ENCODE measurements at regions of chr6 and their contacts with region 1.

Region 1: DNA sequence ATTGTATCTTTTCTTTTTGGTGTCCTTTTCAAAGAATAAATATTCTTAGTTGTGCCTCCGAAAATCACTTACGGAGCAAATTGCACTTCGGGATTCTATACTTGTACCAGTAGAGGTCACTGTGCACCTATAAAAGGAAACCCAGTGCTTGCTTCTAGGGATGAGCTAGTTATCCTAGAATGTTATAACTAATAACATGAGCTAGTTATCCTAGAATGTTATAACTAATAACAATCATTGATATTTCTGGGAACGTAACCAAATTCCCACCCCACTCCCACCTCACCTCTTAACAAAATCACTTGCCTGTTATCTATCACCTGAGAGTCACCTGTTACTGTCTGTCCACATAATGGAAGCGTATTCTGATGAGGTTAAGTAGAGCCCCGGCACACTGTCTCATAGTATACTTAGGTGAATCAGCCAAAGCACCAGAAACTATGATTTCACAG is 126.9 kb upstream of the TIAM2 start:
- DNase-seq: peak in 1 of 2 experiments; percentile 46
- H3K4me3 ChIP-seq: no peak overlapping the region
- H3K4me3 Mint-ChIP-seq: no peak overlapping the region
- H3K27ac Mint-ChIP-seq: no peak overlapping the region
- H3K4me1 ChIP-seq: peaks cover 8% of the 10 kb centered on the region
- H3K4me1 Mint-ChIP-seq: peaks cover 10% of the 10 kb centered on the region
- H3K27me3 ChIP-seq: no peaks in the 10 kb centered on the region
- H3K27me3 Mint-ChIP-seq: no peaks in the 10 kb centered on the region
- CTCF ChIP-seq: peak; percentile 66 to 75

Region 2: GRCh38 chr6:154733012-154733625 is 135.1 kb before region 1 on chr6 and contains the start of gene SCAF8:
- CTCF ChIA-PET with region 1: no interaction called
- POLR2A ChIA-PET with region 1: no interaction called
- intact Hi-C with region 1: loop called (anchors 5 kb)
- DNase-seq: peak; percentile 67 to 92
- H3K4me3 ChIP-seq: peak within 1 kb of the TSS; percentile 92
- H3K4me3 Mint-ChIP-seq: peak within 1 kb of the TSS; percentile 84
- H3K27ac Mint-ChIP-seq: peak within 1 kb of the TSS; percentile 89
- H3K4me1 ChIP-seq: peaks cover 13% of the 10 kb centered on the region
- H3K4me1 Mint-ChIP-seq: peaks cover 12% of the 10 kb centered on the region
- H3K27me3 ChIP-seq: no peaks in the 10 kb centered on the region
- H3K27me3 Mint-ChIP-seq: no peaks in the 10 kb centered on the region
- CTCF ChIP-seq: peak; percentile 53 to 79
- total RNA-seq, gene SCAF8: 45.2 and 45.9 TPM in 2 replicates

Region 3: DNA sequence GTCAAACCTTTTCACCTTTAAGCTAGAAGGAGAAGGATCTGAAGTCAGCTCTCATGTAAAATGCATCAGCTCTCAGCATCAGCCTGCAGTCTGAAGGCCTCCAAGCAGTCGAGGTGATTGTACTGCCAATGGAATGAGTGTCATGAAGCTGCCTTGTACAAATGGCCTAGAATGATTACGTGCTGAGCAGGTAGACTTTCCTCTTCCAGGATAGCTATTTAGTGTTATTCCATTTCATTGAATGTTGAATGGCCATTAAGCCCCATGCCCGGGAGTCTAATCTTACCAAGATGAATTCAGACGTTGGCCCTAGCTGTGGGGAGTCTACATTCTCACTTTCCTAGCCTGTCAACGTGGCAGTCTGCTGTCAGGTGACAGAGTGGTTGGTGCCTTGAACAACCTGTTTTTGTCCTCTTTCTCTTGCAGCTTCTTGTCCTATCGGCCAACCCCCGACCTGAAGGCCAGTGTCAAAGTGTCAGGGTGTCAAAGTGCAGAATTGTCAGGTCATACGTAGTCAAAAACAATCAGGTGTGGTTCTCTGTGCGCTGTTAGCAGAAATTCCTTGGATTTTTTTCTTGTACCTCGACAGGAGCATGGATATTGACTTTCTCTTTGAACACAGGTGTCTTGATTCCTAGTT is 31.8 kb after region 1 on chr6:
- CTCF ChIA-PET with region 1: interaction called, 4 read pairs
- POLR2A ChIA-PET with region 1: no interaction called
- intact Hi-C with region 1: loop called (anchors 1 kb)
- DNase-seq: peak; percentile 65 to 70
- H3K4me3 ChIP-seq: no peak overlapping the region
- H3K4me3 Mint-ChIP-seq: peak overlapping the region; percentile 26
- H3K27ac Mint-ChIP-seq: peak overlapping the region; percentile 85
- H3K4me1 ChIP-seq: peaks cover 18% of the 10 kb centered on the region
- H3K4me1 Mint-ChIP-seq: peaks cover 10% of the 10 kb centered on the region
- H3K27me3 ChIP-seq: no peaks in the 10 kb centered on the region
- H3K27me3 Mint-ChIP-seq: no peaks in the 10 kb centered on the region
- CTCF ChIP-seq: no peak

Region 4: GRCh38 chr6:154928325-154928922 is 60.3 kb after region 1 on chr6:
- CTCF ChIA-PET with region 1: interaction called, 10 read pairs
- POLR2A ChIA-PET with region 1: no interaction called
- intact Hi-C with region 1: loop called (anchors 1 kb)
- DNase-seq: peak; percentile 47 to 71
- H3K4me3 ChIP-seq: no peak overlapping the region
- H3K4me3 Mint-ChIP-seq: no peak overlapping the region
- H3K27ac Mint-ChIP-seq: no peak overlapping the region
- H3K4me1 ChIP-seq: peaks cover 25% of the 10 kb centered on the region
- H3K4me1 Mint-ChIP-seq: peaks cover 21% of the 10 kb centered on the region
- H3K27me3 ChIP-seq: no peaks in the 10 kb centered on the region
- H3K27me3 Mint-ChIP-seq: no peaks in the 10 kb centered on the region
- CTCF ChIP-seq: peak; percentile 74 to 77

Region 5: DNA sequence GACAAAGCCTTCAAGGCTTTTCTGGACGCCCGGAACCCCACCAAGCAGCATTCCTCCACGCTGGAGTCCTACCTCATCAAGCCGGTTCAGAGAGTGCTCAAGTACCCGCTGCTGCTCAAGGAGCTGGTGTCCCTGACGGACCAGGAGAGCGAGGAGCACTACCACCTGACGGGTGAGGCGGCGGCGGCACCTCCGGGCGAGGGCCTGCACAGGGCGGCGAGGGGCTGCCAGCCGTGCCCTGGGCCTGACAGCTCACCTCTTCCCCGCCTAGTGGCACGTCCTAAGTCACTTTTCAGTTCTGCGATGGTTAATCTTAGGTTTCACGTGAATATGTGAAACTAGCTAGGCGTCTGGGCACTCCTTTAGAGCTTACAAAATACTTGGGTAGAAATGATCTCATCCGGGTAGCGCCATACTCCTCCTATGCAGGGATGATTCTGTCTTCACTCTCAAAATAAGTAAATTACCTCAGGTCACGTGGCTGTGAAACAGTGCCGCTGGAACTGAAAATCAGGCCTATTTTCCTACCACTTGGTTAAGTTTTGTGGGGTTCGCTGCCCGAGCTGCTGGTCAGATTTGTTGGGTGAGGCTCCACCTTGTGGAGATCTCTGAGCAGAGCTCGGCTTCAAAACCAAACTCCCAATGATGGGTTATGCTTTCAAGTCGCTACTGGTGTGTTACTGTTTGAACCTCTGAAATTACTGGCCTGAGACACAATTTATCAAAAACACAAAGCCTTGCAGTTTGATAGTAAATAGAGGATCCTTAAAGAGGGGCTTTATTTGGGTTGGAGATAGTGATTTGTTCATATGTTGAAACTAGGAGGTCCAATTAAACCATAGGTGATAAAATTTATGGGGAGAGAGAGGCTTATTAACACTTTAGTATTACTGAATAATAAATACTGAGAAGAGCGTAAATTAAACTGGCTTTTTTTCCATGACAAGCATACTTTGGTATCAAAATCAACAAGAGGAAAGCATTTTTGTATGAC is 380.1 kb after region 1 on chr6:
- CTCF ChIA-PET with region 1: interaction called, 6 read pairs
- POLR2A ChIA-PET with region 1: no interaction called
- intact Hi-C with region 1: loop called (anchors 10 kb)
- DNase-seq: peak; percentile 54 to 55
- H3K4me3 ChIP-seq: no peak overlapping the region
- H3K4me3 Mint-ChIP-seq: no peak overlapping the region
- H3K27ac Mint-ChIP-seq: peak overlapping the region; percentile 69
- H3K4me1 ChIP-seq: peaks cover 21% of the 10 kb centered on the region
- H3K4me1 Mint-ChIP-seq: peaks cover 11% of the 10 kb centered on the region
- H3K27me3 ChIP-seq: no peaks in the 10 kb centered on the region
- H3K27me3 Mint-ChIP-seq: no peaks in the 10 kb centered on the region
- CTCF ChIP-seq: peak; percentile 53 to 66

Measured in Caco-2 (cell line).